WTC11 (cell line): ENCODE measurements at regions of chr1 and their contacts with region 1.

Region 1: GRCh38 chr1:21216835-21217811 is 40.4 kb upstream of the EIF4G3 start:
- DNase-seq: peak; percentile 81
- ATAC-seq: peak; percentile 34
- H3K4me3 Mint-ChIP-seq: no peak overlapping the region
- H3K27ac Mint-ChIP-seq: no peak overlapping the region
- H3K4me1 Mint-ChIP-seq: peaks cover 7% of the 10 kb centered on the region; the same call in 1 of the 2 replicates
- H3K27me3 Mint-ChIP-seq: no peaks in the 10 kb centered on the region
- CTCF ChIP-seq: peak; percentile 76

Region 2: GRCh38 chr1:21165646-21166045 is 51.5 kb before region 1 on chr1:
- CTCF ChIA-PET with region 1: no interaction called
- POLR2A ChIA-PET with region 1: no interaction called
- DNase-seq: no peak
- ATAC-seq: no peak
- H3K4me3 Mint-ChIP-seq: no peak overlapping the region
- H3K27ac Mint-ChIP-seq: 0 out of 2 replicates have a peak overlapping the region, but pooled peaks have one; percentile 7
- H3K4me1 Mint-ChIP-seq: no peaks in the 10 kb centered on the region
- H3K27me3 Mint-ChIP-seq: no peaks in the 10 kb centered on the region; the same call in 1 of the 2 replicates
- CTCF ChIP-seq: no peak

Region 3: DNA sequence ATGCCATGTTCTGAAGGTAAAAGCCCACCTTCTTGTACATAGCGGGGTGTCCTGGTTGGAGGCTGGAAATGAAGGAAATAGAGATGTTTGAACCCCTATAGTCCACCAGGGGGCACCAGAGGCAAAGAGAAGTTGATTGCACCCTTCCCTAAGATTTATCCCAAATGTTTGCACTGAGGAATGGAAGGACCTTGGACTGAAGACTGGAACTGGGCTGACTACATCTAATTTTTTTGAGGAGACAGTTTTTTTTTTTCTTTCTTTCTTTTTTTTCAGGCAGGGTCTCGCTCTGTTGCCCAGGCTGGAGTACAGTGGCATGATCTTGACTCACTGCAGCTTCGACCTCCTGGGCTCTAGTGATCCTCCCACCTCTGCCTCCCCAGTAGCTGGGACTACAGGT is 14.9 kb after region 1 on chr1:
- CTCF ChIA-PET with region 1: interaction called, 19 read pairs
- POLR2A ChIA-PET with region 1: no interaction called
- DNase-seq: peak; percentile 37
- ATAC-seq: peak; percentile 66
- H3K4me3 Mint-ChIP-seq: no peak overlapping the region
- H3K27ac Mint-ChIP-seq: no peak overlapping the region
- H3K4me1 Mint-ChIP-seq: peaks cover 6% of the 10 kb centered on the region; the same call in 1 of the 2 replicates
- H3K27me3 Mint-ChIP-seq: no peaks in the 10 kb centered on the region
- CTCF ChIP-seq: peak; percentile 65

Region 4: DNA sequence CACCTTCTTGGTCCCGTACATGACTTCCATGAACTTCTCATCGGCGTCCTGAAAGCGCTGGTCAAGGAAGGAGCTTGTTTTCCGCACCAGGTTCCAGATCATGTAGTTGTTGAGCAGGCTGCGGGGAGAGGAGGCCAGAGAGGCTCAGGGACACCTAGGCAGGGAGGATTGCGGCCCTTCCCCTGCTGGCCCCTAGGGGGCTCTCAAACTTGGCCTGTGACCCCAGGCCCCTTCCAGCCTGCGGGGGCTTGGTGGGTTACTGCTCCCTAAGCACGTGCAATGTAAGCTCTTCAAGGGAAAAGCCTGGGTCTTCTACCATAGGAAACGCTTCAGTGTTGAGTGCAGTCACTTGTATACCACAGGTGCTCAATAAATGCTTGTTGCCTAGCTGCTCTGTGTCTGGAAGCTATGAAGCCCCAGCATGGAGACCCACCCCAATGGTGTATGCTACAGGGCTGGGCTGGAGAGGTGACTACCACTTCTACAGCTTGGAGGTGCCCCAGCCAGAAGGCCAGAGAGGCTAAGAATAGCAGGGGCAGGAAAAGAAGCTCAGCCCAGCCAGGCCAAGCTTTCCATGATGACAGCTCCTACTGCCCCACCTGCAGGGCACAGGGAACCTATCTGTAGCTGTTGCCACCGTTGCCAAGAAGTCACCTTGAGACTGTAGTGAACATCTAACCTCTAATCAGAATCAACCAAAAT is 28.0 kb after region 1 on chr1:
- CTCF ChIA-PET with region 1: interaction called, 18 read pairs
- POLR2A ChIA-PET with region 1: no interaction called
- DNase-seq: peak; percentile 67
- ATAC-seq: peak; percentile 88
- H3K4me3 Mint-ChIP-seq: no peak overlapping the region
- H3K27ac Mint-ChIP-seq: no peak overlapping the region
- H3K4me1 Mint-ChIP-seq: peaks cover 7% of the 10 kb centered on the region
- H3K27me3 Mint-ChIP-seq: no peaks in the 10 kb centered on the region
- CTCF ChIP-seq: peak; percentile 66

Region 5: DNA sequence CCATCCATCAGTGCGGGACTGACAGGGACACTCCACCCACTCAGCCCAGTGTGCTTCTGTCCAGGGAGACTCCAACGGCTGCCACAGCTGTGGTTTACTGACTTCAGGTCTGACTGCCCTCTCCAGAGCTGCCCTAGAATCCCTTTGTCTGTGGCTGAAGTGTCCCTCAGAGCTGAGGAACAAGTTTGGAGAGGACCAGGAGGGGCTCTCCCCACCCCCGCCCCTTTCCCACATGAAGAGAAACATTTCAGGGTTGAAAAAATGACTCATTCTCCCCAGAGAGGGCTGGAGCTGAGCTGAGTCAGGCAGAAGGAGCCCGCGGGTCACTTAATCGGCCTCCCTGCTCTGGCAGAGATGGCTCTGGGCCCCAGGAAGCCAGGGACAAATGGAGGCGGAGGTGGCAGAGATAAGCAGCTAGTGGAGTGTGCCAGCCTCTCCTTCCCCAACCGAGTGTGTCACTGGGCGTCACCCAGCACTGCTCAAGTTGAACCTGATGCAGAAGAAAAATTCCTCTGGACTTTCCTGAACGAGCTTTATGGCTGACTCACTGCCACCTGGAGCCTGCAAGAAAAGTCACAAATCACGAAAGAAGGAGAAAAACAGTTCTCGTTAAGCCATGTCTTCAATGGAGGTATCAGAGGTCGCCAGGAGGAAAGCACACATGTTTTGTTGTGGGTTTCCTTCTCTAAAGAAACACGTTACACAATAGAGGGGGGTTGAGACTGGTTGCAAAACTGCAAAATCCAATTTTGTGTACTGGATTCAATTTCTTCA is 107.4 kb after region 1 on chr1:
- CTCF ChIA-PET with region 1: interaction called, 12 read pairs
- POLR2A ChIA-PET with region 1: no interaction called
- DNase-seq: no peak
- ATAC-seq: no peak
- H3K4me3 Mint-ChIP-seq: no peak overlapping the region
- H3K27ac Mint-ChIP-seq: peak overlapping the region; percentile 79
- H3K4me1 Mint-ChIP-seq: peaks cover 95% of the 10 kb centered on the region
- H3K27me3 Mint-ChIP-seq: no peaks in the 10 kb centered on the region
- CTCF ChIP-seq: no peak

Region 6: DNA sequence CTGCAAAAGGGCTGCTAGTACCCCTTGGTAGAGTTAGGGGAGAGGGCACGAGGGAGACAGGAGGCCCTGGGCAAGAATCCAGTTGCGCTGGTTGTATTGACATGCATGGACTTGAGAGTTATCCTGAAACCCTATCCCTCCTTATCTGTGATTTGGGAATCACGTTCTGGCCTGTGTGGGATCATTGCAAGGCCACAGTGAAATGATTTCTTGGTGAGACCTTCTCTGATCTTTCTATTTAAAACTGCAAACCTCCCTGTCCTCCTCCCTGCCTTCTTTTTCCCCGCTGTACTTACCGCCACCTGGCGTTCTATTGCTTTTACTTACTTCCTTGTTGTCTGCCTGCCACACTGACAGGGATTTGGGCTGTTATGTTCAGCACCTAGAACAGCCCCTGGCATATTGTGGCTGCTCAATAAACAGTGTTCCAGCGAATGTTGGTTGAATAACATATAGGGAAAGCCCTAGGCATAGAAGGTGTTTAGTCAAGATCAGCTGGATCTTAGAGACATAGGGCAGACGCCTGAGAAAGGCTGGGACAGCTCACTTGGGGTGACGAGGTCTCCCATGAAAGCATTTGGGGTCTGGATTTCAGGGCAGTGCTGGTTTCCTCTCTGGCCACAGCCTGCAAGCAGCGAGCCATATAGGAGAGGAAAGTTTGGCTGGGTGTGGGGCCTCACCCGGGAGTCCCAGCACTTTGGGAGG is 317.7 kb after region 1 on chr1:
- CTCF ChIA-PET with region 1: no interaction called
- POLR2A ChIA-PET with region 1: no interaction called
- DNase-seq: peak; percentile 52
- ATAC-seq: peak; percentile 77
- H3K4me3 Mint-ChIP-seq: no peak overlapping the region
- H3K27ac Mint-ChIP-seq: no peak overlapping the region; the same call in 1 of the 2 replicates
- H3K4me1 Mint-ChIP-seq: peaks cover 45% of the 10 kb centered on the region
- H3K27me3 Mint-ChIP-seq: no peaks in the 10 kb centered on the region
- CTCF ChIP-seq: no peak